CD4-positive, alpha-beta memory T cell (primary cell): ENCODE measurements at regions of chr18 and their contacts with region 1.

Region 1: GRCh38 chr18:46173393-46174341 is 69.5 kb downstream of the HAUS1 start:
- DNase-seq: peak; percentile 90 to 94 (median 91)
- H3K4me3 ChIP-seq: peak overlapping the region; percentile 93 to 100
- H3K4me3 Mint-ChIP-seq: peak overlapping the region; percentile 97 to 99 (median 98)
- H3K27ac ChIP-seq: peak overlapping the region; percentile 91
- H3K27ac Mint-ChIP-seq: peak overlapping the region; percentile 96 to 100 (median 99)
- H3K4me1 ChIP-seq: peaks cover 42% of the 10 kb centered on the region
- H3K4me1 Mint-ChIP-seq: peaks cover 20 to 67% (median 28%) of the 10 kb centered on the region in 4 donors
- H3K27me3 ChIP-seq: no peaks in the 10 kb centered on the region
- H3K27me3 Mint-ChIP-seq: no peaks in the 10 kb centered on the region

Region 2: DNA sequence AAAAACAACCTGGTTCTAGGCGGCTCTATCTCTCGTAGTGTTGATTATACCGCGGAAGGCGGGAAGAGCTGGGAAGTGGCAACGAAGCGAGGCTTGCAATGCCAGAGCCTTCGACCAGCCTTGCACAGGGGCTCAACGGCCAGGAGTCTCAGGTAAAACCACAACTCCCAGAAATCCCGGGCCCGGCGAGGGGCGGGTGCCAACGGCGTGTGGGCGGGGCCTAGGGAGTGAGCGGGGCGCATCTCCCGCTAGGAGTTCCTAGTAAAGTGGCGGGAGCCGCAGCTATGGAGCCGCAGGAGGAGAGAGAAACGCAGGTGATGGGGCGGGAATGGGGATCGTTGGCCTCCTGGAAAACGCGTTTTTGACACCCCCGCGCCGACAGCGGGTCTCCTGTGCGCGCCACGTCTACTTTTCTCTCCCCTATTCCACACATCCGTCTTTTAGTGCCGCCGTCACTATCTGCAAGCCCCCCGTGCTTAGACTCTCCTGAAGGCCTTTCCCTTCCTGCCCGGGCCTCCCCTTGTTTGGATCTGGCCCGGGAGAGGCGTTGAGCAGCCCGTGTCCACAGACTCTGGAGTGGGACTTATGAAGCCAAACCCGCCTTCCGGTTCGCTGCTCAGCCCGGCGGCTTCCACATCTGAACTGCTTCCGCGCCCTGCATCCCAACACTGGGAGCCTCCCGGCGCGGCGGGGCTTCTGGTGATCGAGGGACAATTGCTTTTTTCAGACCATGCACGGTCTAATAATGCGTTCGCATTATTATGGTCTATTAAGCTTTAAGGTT is 69.3 kb before region 1 on chr18 and contains the start of gene HAUS1:
- CTCF ChIA-PET with region 1: interaction called, 15 read pairs
- POLR2A ChIA-PET with region 1: no interaction called
- intact Hi-C with region 1: loop called (anchors 2 kb)
- DNase-seq: peak; percentile 65 to 81 (median 72)
- H3K4me3 ChIP-seq: peak within 1 kb of the TSS; percentile 75 to 86
- H3K4me3 Mint-ChIP-seq: peak within 1 kb of the TSS; percentile 97 to 99 (median 98)
- H3K27ac ChIP-seq: peak within 1 kb of the TSS; percentile 64
- H3K27ac Mint-ChIP-seq: peak within 1 kb of the TSS; percentile 84 to 98 (median 92)
- H3K4me1 ChIP-seq: peaks cover 13% of the 10 kb centered on the region
- H3K4me1 Mint-ChIP-seq: peaks cover 12 to 33% (median 23%) of the 10 kb centered on the region in 4 donors
- H3K27me3 ChIP-seq: no peaks in the 10 kb centered on the region
- H3K27me3 Mint-ChIP-seq: no peaks in the 10 kb centered on the region
- total RNA-seq, gene HAUS1: 23.2 to 23.3 TPM

Region 3: GRCh38 chr18:46155641-46156051 is 18.0 kb before region 1 on chr18:
- CTCF ChIA-PET with region 1: interaction called, 158 read pairs
- POLR2A ChIA-PET with region 1: interaction called, 7 read pairs
- intact Hi-C with region 1: loop called (anchors 1 kb)
- DNase-seq: peak; percentile 53 to 65 (median 57)
- H3K4me3 ChIP-seq: peak overlapping the region in 1 of 2 donors; percentile 21
- H3K4me3 Mint-ChIP-seq: peak overlapping the region; percentile 16 to 84 (median 80)
- H3K27ac ChIP-seq: peak overlapping the region; percentile 56
- H3K27ac Mint-ChIP-seq: peak overlapping the region; percentile 60 to 97 (median 86)
- H3K4me1 ChIP-seq: peaks cover 92% of the 10 kb centered on the region
- H3K4me1 Mint-ChIP-seq: peaks cover 43 to 86% (median 70%) of the 10 kb centered on the region in 4 donors
- H3K27me3 ChIP-seq: no peaks in the 10 kb centered on the region
- H3K27me3 Mint-ChIP-seq: no peaks in the 10 kb centered on the region

Region 4: DNA sequence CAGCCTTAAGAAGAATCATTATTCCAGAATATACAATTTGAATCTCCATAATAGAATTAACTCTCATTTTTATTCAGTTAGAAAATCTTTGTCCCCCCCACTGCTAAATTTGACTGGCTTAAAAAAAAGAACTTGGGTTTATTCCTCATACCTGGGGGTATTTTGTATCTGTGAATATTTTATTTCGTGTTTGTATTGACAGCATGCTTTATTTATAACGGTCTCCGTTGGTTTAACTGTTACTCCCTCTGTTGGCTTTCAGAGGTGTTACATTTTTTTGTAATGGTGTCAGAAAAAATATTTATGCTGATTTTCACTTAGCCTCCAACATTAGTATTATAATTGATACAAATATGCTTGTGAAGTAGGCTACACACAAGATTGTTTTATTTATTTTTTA is 39.6 kb after region 1 on chr18:
- CTCF ChIA-PET with region 1: interaction called, 80 read pairs
- POLR2A ChIA-PET with region 1: interaction called, 13 read pairs
- intact Hi-C with region 1: loop called (anchors 1 kb)
- DNase-seq: peak in 4 of 5 donors; percentile 35 to 54 (median 40)
- H3K4me3 ChIP-seq: no peak overlapping the region
- H3K4me3 Mint-ChIP-seq: peak overlapping the region in 6 of 8 donors; percentile 50 to 75 (median 58)
- H3K27ac ChIP-seq: no peak overlapping the region
- H3K27ac Mint-ChIP-seq: peak overlapping the region in 5 of 7 donors; percentile 37 to 81 (median 65)
- H3K4me1 ChIP-seq: peaks cover 73% of the 10 kb centered on the region
- H3K4me1 Mint-ChIP-seq: peaks cover 55 to 96% (median 80%) of the 10 kb centered on the region in 4 donors
- H3K27me3 ChIP-seq: no peaks in the 10 kb centered on the region
- H3K27me3 Mint-ChIP-seq: no peaks in the 10 kb centered on the region

Region 5: DNA sequence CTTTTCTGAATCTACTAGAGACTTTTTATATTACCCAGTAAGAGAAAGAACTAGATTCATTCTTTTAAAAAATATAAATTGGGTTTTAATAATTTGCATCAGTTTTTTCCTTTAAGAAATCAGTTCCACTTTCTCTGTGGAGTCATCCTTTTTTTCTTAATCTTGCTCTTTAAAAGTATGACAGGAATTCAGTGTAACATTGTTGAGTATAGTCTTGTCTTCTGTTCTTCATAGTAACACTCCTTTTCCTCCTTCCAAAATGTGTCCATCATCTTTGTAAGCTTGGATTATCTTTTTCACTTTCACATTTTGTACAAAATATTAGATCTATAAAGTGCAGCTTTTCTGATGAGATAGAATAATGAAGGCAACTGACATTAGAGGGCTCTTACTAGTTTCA is 65.9 kb after region 1 on chr18:
- CTCF ChIA-PET with region 1: interaction called, 14 read pairs
- POLR2A ChIA-PET with region 1: no interaction called
- intact Hi-C with region 1: no loop called
- DNase-seq: no peak
- H3K4me3 ChIP-seq: no peak overlapping the region
- H3K4me3 Mint-ChIP-seq: no peak overlapping the region
- H3K27ac ChIP-seq: no peak overlapping the region
- H3K27ac Mint-ChIP-seq: peak overlapping the region in 2 of 7 donors; percentile 26 to 81
- H3K4me1 ChIP-seq: peaks cover 20% of the 10 kb centered on the region
- H3K4me1 Mint-ChIP-seq: peaks cover 23 to 49% (median 36%) of the 10 kb centered on the region in 4 donors
- H3K27me3 ChIP-seq: no peaks in the 10 kb centered on the region
- H3K27me3 Mint-ChIP-seq: no peaks in the 10 kb centered on the region

Region 6: DNA sequence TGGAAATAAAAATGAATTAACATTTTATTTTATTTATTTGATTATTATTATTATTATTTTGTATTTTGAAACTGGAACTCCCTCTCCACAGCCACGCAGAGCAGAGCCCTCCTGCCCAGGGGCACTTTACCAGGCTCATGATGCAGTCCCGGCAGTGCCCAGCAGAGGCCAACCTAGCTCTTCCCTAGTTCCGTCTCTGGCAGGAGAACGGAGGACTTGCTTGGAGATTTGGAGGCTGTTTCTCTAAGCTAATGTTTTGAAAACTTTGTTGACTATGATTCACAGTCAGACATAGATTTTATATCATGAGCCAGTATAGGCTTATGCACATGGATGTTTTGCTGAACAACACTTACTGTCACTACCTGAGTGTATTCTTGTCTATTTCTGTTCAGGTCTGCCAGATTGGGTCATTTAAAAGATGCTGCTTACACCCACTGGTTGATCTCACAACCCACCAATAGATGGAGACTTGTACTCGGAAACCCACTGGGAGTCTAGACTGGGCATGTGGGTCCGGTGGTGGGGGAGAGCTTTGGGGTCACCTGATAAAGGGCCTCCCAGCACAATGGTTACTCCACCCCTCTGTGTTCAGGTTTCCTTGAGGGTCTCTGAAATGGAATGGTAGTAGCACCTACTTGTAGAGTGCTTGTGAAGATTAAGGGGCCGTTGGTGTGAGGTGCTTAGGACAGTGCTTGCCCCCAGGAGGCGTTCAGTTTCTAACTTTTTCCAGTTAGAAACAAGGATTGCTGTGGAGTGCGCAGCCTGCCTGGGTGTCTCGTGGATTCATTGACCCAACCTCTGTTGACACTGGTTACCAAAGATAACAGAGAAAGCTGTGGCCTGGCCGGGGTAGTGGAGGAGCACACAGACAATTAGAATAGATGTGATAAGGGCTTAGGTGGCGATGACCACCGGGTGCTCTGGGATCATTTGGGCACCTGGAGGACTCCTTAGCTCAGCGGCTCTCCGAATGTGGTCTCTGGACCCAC is 107.8 kb after region 1 on chr18:
- CTCF ChIA-PET with region 1: interaction called, 41 read pairs
- POLR2A ChIA-PET with region 1: interaction called, 3 read pairs
- intact Hi-C with region 1: loop called (anchors 5 kb)
- DNase-seq: peak; percentile 23 to 56 (median 42)
- H3K4me3 ChIP-seq: no peak overlapping the region
- H3K4me3 Mint-ChIP-seq: no peak overlapping the region
- H3K27ac ChIP-seq: no peak overlapping the region
- H3K27ac Mint-ChIP-seq: no peak overlapping the region
- H3K4me1 ChIP-seq: peaks cover 8% of the 10 kb centered on the region
- H3K4me1 Mint-ChIP-seq: peaks cover 9 to 23% (median 14%) of the 10 kb centered on the region in 4 donors
- H3K27me3 ChIP-seq: no peaks in the 10 kb centered on the region
- H3K27me3 Mint-ChIP-seq: no peaks in the 10 kb centered on the region

Region 7: DNA sequence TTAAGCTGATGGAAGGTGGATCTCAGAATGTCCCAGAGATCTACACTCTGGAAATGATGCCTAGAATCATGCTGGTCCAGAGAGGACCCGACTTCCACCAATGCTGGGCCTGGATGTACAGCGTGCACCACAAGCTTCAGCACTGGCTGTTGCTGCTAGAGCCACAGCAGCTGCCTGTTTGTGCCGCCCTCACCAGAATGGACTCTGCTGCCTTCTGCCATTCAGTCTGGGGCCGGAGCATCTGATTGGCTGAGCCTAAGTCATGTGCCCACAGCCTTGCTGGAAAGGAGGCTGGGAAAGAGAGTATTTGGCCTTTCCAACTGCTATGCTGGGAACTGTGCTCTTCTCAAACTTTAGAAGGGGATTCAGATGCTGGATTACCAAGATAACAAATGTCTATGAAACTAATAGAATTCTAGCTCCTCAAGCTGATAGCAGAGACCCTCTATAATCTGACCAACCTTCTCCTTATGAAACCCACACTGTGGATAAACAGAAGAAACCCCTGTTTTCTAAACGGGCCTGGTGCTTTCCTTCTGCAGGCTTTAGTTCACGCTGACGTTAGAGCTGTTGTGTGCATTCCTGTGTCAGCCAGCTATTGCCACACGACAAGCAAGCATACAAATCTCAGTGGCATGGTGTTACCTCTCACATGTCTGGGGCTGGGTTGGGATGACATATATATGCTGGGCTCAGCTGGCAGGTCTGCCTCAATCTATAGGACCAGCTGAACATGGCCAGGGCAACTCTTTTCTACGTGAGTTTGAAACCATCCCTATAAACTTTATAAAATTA is 487.5 kb after region 1 on chr18:
- CTCF ChIA-PET with region 1: interaction called, 74 read pairs
- POLR2A ChIA-PET with region 1: interaction called, 6 read pairs
- intact Hi-C with region 1: no loop called
- DNase-seq: no peak
- H3K4me3 ChIP-seq: no peak overlapping the region
- H3K4me3 Mint-ChIP-seq: no peak overlapping the region
- H3K27ac ChIP-seq: no peak overlapping the region
- H3K27ac Mint-ChIP-seq: no peak overlapping the region
- H3K4me1 ChIP-seq: no peaks in the 10 kb centered on the region
- H3K4me1 Mint-ChIP-seq: no peaks in the 10 kb centered on the region
- H3K27me3 ChIP-seq: no peaks in the 10 kb centered on the region
- H3K27me3 Mint-ChIP-seq: peaks cover 0 to 3% of the 10 kb centered on the region in 2 donors